ENCODE measurements at regions of chr10 and their contacts with region 1.

Region 1: DNA sequence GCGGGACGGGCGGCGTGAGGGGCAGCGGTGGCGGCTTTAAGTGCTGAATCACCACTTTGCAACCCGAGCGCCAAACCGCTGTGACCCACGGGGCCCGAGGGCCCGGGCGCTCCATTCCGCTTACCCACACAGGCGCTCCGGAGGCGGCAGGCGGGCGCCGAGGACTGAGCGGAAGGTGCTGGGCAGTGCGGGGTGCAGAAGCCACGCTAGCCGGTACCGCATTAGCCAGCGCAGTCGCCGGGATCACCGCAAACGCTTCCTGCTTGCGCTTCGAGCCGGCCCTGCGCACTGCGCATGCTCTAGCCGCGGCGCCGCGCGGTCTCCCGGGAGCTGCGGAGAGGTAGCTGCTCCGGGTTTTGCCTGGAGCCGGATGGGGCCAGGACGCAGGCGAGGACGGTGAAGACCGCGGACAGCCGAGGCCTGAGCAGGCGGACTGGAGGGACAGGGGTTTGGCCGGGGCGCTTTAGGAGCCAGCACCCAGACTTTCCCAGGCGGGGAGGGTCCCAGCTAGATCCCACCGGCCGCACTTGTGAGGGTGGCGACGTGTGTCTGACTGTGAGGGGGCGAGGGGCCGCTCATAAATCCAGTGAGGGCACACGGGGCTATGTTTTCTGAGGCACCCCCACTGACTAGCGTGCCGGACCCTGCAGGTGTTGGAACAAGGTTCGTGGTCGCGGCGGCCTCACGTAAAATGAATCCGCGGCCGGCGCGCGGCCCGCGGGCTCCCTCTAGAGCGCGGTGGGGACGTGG is at the start of gene IDE:
- DNase-seq: peak; percentile 84
- H3K4me3 Mint-ChIP-seq: peak within 1 kb of the TSS; percentile 88
- H3K27ac Mint-ChIP-seq: peak within 1 kb of the TSS; percentile 89
- H3K4me1 Mint-ChIP-seq: peaks cover 37% of the 10 kb centered on the region
- H3K27me3 Mint-ChIP-seq: no peaks in the 10 kb centered on the region
- total RNA-seq, gene IDE: 43.4 and 54.5 TPM in 2 replicates

Region 2: GRCh38 chr10:92074126-92074887 is 499.7 kb before region 1 on chr10:
- intact Hi-C with region 1: loop called (anchors 5 kb)
- DNase-seq: no peak
- H3K4me3 Mint-ChIP-seq: no peak overlapping the region
- H3K27ac Mint-ChIP-seq: no peak overlapping the region
- H3K4me1 Mint-ChIP-seq: no peaks in the 10 kb centered on the region
- H3K27me3 Mint-ChIP-seq: no peaks in the 10 kb centered on the region

Region 3: GRCh38 chr10:92087750-92088395 is 486.1 kb before region 1 on chr10:
- intact Hi-C with region 1: loop called (anchors 1 kb)
- DNase-seq: peak; percentile 43
- H3K4me3 Mint-ChIP-seq: no peak overlapping the region
- H3K27ac Mint-ChIP-seq: no peak overlapping the region
- H3K4me1 Mint-ChIP-seq: peaks cover 8% of the 10 kb centered on the region
- H3K27me3 Mint-ChIP-seq: no peaks in the 10 kb centered on the region

Region 4: GRCh38 chr10:92517034-92517655 is 56.8 kb before region 1 on chr10:
- intact Hi-C with region 1: loop called (anchors 1 kb)
- DNase-seq: peak; percentile 48
- H3K4me3 Mint-ChIP-seq: no peak overlapping the region
- H3K27ac Mint-ChIP-seq: no peak overlapping the region
- H3K4me1 Mint-ChIP-seq: peaks cover 8% of the 10 kb centered on the region
- H3K27me3 Mint-ChIP-seq: no peaks in the 10 kb centered on the region

Region 5: GRCh38 chr10:92544296-92544695 is 29.7 kb before region 1 on chr10:
- intact Hi-C with region 1: loop called (anchors 1 kb)
- DNase-seq: peak; percentile 8
- H3K4me3 Mint-ChIP-seq: no peak overlapping the region
- H3K27ac Mint-ChIP-seq: peak overlapping the region; percentile 45
- H3K4me1 Mint-ChIP-seq: peaks cover 28% of the 10 kb centered on the region
- H3K27me3 Mint-ChIP-seq: no peaks in the 10 kb centered on the region

Region 6: GRCh38 chr10:92990615-92991014 is 416.6 kb after region 1 on chr10:
- intact Hi-C with region 1: no loop called
- DNase-seq: no peak
- H3K4me3 Mint-ChIP-seq: no peak overlapping the region
- H3K27ac Mint-ChIP-seq: peak overlapping the region; percentile 53
- H3K4me1 Mint-ChIP-seq: peaks cover 10% of the 10 kb centered on the region
- H3K27me3 Mint-ChIP-seq: no peaks in the 10 kb centered on the region

Region 7: GRCh38 chr10:93702211-93703001 is 1128.4 kb after region 1 on chr10 and contains the start of gene FRA10AC1:
- intact Hi-C with region 1: loop called (anchors 5 kb)
- DNase-seq: peak; percentile 86
- H3K4me3 Mint-ChIP-seq: no peak within 1 kb of the TSS
- H3K27ac Mint-ChIP-seq: no peak within 1 kb of the TSS
- H3K4me1 Mint-ChIP-seq: peaks cover 19% of the 10 kb centered on the region
- H3K27me3 Mint-ChIP-seq: no peaks in the 10 kb centered on the region
- total RNA-seq, gene FRA10AC1: 25.9 and 28.2 TPM in 2 replicates